Right ventricle myocardium inferior (tissue), 1 donor: ENCODE measurements at regions of chr16 and their contacts with region 1.

Region 1: GRCh38 chr16:27520982-27521673 is 28.6 kb downstream of the GTF3C1 start:
- DNase-seq: peak; percentile 73
- ATAC-seq: peak; percentile 92

Region 2: GRCh38 chr16:27618606-27619327 is 97.6 kb after region 1 on chr16:
- intact Hi-C with region 1: loop called (anchors 5 kb)
- DNase-seq: no peak
- ATAC-seq: peak; percentile 73